CD14-positive monocyte (primary cell): ENCODE measurements at regions of chr1 and their contacts with region 1.

Region 1: GRCh38 chr1:109821221-109821669 is 57.5 kb upstream of the EPS8L3 start:
- DNase-seq: peak; percentile 98 to 100 (median 98)
- H3K4me3 ChIP-seq: peak overlapping the region in 1 of 3 experiments; percentile 32
- H3K4me3 Mint-ChIP-seq: peak overlapping the region in 1 of 2 donors; percentile 56
- H3K27ac ChIP-seq: peak overlapping the region; percentile 60 to 79
- H3K27ac Mint-ChIP-seq: peak overlapping the region; percentile 91 to 99 (median 96)
- H3K4me1 ChIP-seq: peaks cover 83 to 94% of the 10 kb centered on the region in 2 donors
- H3K4me1 Mint-ChIP-seq: peaks cover 94% of the 10 kb centered on the region
- H3K27me3 ChIP-seq: no peaks in the 10 kb centered on the region
- H3K27me3 Mint-ChIP-seq: peaks cover 10 to 18% (median 10%) of the 10 kb centered on the region in 3 donors
- CTCF ChIP-seq: no peak

Region 2: GRCh38 chr1:109620841-109621286 is 200.4 kb before region 1 on chr1:
- intact Hi-C with region 1: loop called in 1 of 2 experiments (anchors 5 kb)
- DNase-seq: peak; percentile 96 to 99 (median 98)
- H3K4me3 ChIP-seq: peak overlapping the region; percentile 77 to 96 (median 96)
- H3K4me3 Mint-ChIP-seq: peak overlapping the region; percentile 92 to 97
- H3K27ac ChIP-seq: peak overlapping the region; percentile 99
- H3K27ac Mint-ChIP-seq: peak overlapping the region; percentile 99 to 100 (median 99)
- H3K4me1 ChIP-seq: peaks cover 69 to 77% of the 10 kb centered on the region in 2 donors
- H3K4me1 Mint-ChIP-seq: peaks cover 71% of the 10 kb centered on the region
- H3K27me3 ChIP-seq: no peaks in the 10 kb centered on the region
- H3K27me3 Mint-ChIP-seq: peaks cover 0 to 3% (median 2%) of the 10 kb centered on the region in 3 donors
- CTCF ChIP-seq: no peak

Region 3: GRCh38 chr1:109773146-109773899 is 47.9 kb before region 1 on chr1:
- intact Hi-C with region 1: loop called in 1 of 2 experiments (anchors 5 kb)
- DNase-seq: peak; percentile 72 to 82 (median 78)
- H3K4me3 ChIP-seq: no peak overlapping the region
- H3K4me3 Mint-ChIP-seq: no peak overlapping the region
- H3K27ac ChIP-seq: no peak overlapping the region
- H3K27ac Mint-ChIP-seq: peak overlapping the region in 1 of 7 donors; percentile 19
- H3K4me1 ChIP-seq: no peaks in the 10 kb centered on the region
- H3K4me1 Mint-ChIP-seq: peaks cover 4% of the 10 kb centered on the region
- H3K27me3 ChIP-seq: no peaks in the 10 kb centered on the region
- H3K27me3 Mint-ChIP-seq: peaks cover 0 to 15% (median 13%) of the 10 kb centered on the region in 3 donors
- CTCF ChIP-seq: peak; percentile 81

Region 4: GRCh38 chr1:109864047-109864822 is 43.0 kb after region 1 on chr1:
- intact Hi-C with region 1: loop called in 1 of 2 experiments (anchors 5 kb)
- DNase-seq: peak; percentile 29 to 42 (median 38)
- H3K4me3 ChIP-seq: peak overlapping the region in 1 of 3 experiments; percentile 38
- H3K4me3 Mint-ChIP-seq: peak overlapping the region; percentile 18 to 68
- H3K27ac ChIP-seq: peak overlapping the region in 1 of 2 donors; percentile 18
- H3K27ac Mint-ChIP-seq: peak overlapping the region; percentile 1 to 84 (median 55)
- H3K4me1 ChIP-seq: peaks cover 8 to 18% of the 10 kb centered on the region in 2 donors
- H3K4me1 Mint-ChIP-seq: peaks cover 18% of the 10 kb centered on the region
- H3K27me3 ChIP-seq: no peaks in the 10 kb centered on the region
- H3K27me3 Mint-ChIP-seq: peaks cover 2 to 8% (median 3%) of the 10 kb centered on the region in 3 donors
- CTCF ChIP-seq: no peak

Region 5: DNA sequence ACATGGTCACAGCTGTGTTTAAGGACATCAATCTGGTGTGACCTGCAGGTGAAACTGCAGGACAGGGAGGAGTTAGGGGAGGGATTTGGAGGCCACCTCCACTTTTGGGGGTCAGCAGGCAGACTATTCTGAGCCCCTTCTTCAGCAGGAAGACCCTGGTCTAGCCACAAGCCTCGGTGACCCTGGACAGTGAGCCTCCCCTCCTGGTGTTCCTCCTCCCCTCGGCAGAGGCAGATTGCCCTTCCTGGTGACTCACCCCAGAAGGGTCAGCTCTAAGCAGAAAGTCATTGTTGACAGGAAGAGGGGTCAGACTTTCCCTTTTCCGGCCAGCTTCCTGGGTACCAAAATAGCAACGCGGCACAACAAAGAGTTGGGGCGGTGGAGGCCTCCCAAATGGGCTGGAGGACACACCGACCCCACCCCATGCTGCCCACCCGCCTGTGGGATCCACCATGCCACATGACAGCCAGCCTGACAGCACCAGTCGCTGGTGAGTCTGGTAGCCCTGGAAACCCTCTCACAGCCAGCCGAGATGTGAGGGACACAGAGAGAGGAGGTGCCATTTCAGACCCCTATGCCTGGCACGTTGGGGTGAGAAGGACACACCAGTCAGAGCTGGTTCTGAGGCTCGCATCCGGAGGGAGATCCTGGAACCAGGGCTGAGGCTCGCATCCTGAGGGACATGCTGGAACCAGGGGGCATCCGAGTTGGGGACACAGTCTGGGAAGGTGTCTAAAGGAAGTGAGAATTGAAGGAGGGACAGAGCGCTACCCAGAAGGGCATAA is 74.7 kb after region 1 on chr1:
- intact Hi-C with region 1: loop called (anchors 1 to 2 kb)
- DNase-seq: peak; percentile 88 to 95 (median 94)
- H3K4me3 ChIP-seq: peak overlapping the region in 1 of 3 experiments; percentile 51
- H3K4me3 Mint-ChIP-seq: peak overlapping the region in 1 of 2 donors; percentile 54
- H3K27ac ChIP-seq: peak overlapping the region in 1 of 2 donors; percentile 79
- H3K27ac Mint-ChIP-seq: peak overlapping the region in 2 of 7 donors; percentile 47 to 88
- H3K4me1 ChIP-seq: peaks cover 64 to 74% of the 10 kb centered on the region in 2 donors
- H3K4me1 Mint-ChIP-seq: peaks cover 19% of the 10 kb centered on the region
- H3K27me3 ChIP-seq: peaks cover 0 to 2% of the 10 kb centered on the region in 2 donors
- H3K27me3 Mint-ChIP-seq: peaks cover 10 to 18% (median 14%) of the 10 kb centered on the region in 3 donors
- CTCF ChIP-seq: no peak